Activated T-helper 1 cell treated with anti-CD3 and anti-CD28 coated beads, Interleukin-12 subunit alpha, Interleukin-12 subunit beta, Interleukin-2, Interleukin-4 antibody, amounts not matched to agents 30 ng/mL and 10 ng/mL and 1 ng/mL, durations not matched to agents 14 hours and 24 hours and 36 hours (primary cell): ENCODE measurements at regions of chr6 and their contacts with region 1.

Region 1: GRCh38 chr6:291697-292505 is at the start of gene DUSP22:
- DNase-seq: peak; percentile 79
- H3K4me3 Mint-ChIP-seq: peak within 1 kb of the TSS; percentile 94
- H3K27ac Mint-ChIP-seq: peak within 1 kb of the TSS; percentile 99
- H3K4me1 Mint-ChIP-seq: peaks cover 39% of the 10 kb centered on the region
- H3K27me3 Mint-ChIP-seq: no peaks in the 10 kb centered on the region
- total RNA-seq, gene DUSP22: 22.0 and 22.1 TPM in 2 replicates

Region 2: GRCh38 chr6:251920-252319 is 40.0 kb before region 1 on chr6:
- intact Hi-C with region 1: loop called (anchors 1 kb)
- DNase-seq: no peak
- H3K4me3 Mint-ChIP-seq: peak overlapping the region; percentile 48
- H3K27ac Mint-ChIP-seq: peak overlapping the region; percentile 90
- H3K4me1 Mint-ChIP-seq: peaks cover 38% of the 10 kb centered on the region
- H3K27me3 Mint-ChIP-seq: peaks cover 3% of the 10 kb centered on the region

Region 3: GRCh38 chr6:305371-306206 is 13.7 kb after region 1 on chr6:
- intact Hi-C with region 1: no loop called
- DNase-seq: no peak
- H3K4me3 Mint-ChIP-seq: no peak overlapping the region
- H3K27ac Mint-ChIP-seq: no peak overlapping the region
- H3K4me1 Mint-ChIP-seq: peaks cover 6% of the 10 kb centered on the region
- H3K27me3 Mint-ChIP-seq: no peaks in the 10 kb centered on the region

Region 4: DNA sequence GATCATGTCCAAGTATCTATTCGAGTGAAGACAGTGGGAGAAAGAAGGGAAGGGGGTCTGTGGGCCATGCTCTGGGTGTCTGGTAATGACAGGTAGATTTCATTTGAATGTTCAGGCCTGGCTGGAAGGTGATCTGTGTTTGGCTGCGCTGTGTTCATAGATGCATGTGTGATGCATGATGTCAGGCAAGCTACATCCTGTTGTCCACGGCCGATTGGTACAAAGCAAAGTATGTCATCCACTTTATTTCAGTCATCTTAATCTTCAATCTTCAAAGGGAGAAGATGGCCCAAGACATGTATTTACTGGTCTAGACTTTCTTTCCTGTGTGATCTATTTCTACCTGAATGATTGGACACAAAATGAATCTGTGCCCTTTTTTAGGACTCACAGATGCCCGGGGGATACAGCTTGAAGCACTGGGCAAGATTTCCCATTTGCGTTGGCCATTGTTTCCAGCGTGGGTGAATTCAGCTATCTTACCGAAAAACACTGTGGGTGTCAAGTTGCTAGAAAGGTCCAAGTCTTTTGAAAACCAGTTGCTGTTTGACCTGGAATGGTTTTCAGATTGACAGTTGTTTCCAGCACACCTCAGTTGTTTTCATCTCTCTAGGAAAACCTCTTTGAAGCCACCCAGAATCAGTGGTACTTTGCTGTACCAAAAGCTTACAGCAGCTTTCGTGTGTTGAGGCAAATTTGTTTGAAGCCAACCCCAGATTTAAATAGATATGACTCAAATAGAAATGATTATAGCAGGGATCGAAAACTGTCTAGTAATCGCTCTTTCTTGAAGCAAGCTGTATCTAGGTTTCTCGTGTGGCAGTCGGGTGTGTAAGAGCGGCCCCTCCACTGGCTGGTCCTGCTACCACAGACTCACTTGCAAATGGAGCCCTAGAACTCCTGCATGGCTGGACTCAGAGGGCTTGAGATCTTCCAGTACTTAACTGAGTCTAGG is 27.6 kb after region 1 on chr6:
- intact Hi-C with region 1: loop called (anchors 1 kb)
- DNase-seq: no peak
- H3K4me3 Mint-ChIP-seq: no peak overlapping the region
- H3K27ac Mint-ChIP-seq: no peak overlapping the region
- H3K4me1 Mint-ChIP-seq: peaks cover 10% of the 10 kb centered on the region
- H3K27me3 Mint-ChIP-seq: peaks cover 2% of the 10 kb centered on the region

Region 5: DNA sequence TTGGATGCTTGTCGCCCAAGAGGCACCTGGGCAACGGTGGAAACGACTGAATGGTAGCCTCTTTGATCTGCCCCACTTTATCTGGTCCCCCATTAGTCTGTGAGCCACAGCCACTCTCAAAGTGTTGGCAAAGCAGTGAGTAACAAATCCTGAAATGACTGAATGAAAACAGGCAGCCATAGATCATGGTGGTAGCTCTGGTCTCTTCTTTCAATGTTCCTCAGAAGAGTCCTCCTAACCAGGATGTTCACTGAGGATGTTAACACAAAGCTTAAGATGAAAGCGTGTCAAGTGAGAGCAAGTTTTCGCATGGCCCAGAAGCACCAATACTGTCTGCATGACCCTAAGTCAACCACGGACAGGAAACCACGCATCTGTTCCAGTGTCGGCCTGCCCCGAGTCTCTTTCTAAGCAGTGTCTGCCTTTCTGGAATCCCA is 206.9 kb after region 1 on chr6:
- intact Hi-C with region 1: loop called (anchors 2 kb)
- DNase-seq: peak; percentile 56
- H3K4me3 Mint-ChIP-seq: peak overlapping the region; percentile 80
- H3K27ac Mint-ChIP-seq: peak overlapping the region; percentile 94
- H3K4me1 Mint-ChIP-seq: peaks cover 87% of the 10 kb centered on the region
- H3K27me3 Mint-ChIP-seq: no peaks in the 10 kb centered on the region

Region 6: DNA sequence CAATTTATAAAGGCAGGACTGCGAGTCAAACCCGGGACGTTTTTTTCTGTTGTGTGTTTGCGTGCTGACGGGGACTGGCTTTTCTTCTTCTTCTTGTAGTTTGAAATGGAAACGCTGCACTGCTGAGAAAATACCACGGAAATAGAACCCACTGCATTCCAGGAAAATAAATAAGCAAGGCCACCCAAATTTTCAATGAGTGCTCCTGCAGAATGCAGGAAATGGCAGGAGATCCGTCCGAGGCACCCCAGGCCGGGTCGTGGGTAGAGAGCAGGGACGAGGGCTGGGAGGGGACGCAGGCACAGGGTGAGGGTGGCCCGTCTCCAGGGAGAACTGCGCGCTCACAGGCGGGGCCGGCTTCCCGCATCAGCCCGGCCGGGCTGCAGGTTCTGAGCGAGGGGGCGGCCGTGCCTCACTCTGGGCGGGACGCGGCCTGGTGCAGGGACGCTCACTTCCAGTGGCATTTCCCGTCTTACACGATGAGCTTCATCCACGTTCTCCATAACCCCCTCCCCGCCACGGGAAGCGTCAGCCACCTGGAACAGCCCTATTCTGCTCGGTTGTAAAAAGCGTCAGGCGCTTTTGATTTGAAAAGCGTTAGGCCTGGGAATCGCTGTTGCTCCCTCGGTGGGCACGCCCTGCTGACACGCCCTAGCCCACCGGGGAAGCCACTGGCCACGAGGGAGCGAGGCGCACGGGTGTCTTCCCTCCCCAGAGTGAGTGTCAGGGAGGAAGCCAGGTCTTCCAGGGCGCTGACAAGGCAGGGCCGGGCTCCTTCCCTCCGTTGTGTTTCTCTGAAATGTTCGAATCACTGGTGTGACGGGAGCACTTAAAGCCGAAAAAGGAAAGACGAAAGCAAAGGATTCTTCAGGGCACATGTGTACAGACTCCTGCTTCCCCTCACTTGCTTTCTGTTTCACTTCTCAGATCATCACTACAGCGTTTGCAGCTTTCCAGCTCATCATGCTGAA is 419.0 kb after region 1 on chr6:
- intact Hi-C with region 1: loop called (anchors 10 kb)
- DNase-seq: peak; percentile 64
- H3K4me3 Mint-ChIP-seq: peak overlapping the region; percentile 95
- H3K27ac Mint-ChIP-seq: peak overlapping the region; percentile 99
- H3K4me1 Mint-ChIP-seq: peaks cover 44% of the 10 kb centered on the region
- H3K27me3 Mint-ChIP-seq: no peaks in the 10 kb centered on the region